Common myeloid progenitor, CD34-positive (primary cell): ENCODE measurements at regions of chr2 and their contacts with region 1.

Region 1: DNA sequence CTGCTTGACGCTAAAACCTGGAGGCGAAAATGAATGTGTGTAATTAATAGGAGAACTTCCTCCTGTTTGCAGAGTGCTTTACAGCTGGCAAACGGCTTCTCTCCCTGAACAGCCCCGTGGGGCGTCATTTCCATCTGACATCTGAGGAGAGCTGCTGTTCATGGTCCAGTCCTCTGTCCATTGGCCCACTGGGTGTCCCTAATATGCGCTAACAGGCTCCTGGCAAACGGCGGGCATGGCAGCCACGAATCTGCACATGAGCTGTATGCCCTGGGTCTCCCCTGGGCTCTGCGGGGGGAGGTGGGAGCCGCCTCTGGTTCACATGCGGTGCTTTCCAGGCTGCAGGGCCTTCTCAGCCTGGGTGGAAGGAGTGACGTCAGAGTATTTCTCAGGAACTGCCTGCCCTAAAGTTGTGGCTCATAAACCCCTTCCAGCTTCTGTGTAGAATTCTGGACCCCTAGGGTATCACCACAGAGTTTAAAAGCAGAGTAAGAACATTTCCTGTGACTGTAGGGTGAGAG is 73.2 kb downstream of the LRRFIP1 start:
- DNase-seq: peak in 2 of 3 donors; percentile 87 to 88
- H3K4me3 ChIP-seq: peak overlapping the region in 4 of 7 experiments; percentile 33 to 69 (median 46)
- H3K27ac ChIP-seq: peak overlapping the region; percentile 16 to 73
- H3K4me1 ChIP-seq: peaks cover 55 to 98% (median 97%) of the 10 kb centered on the region in 4 experiments
- H3K27me3 ChIP-seq: no peaks in the 10 kb centered on the region

Region 2: GRCh38 chr2:237744613-237745249 is 44.2 kb after region 1 on chr2:
- CTCF ChIA-PET with region 1: interaction called, 17 read pairs
- POLR2A ChIA-PET with region 1: no interaction called
- DNase-seq: peak; percentile 60 to 72 (median 68)
- H3K4me3 ChIP-seq: no peak overlapping the region
- H3K27ac ChIP-seq: no peak overlapping the region
- H3K4me1 ChIP-seq: peaks cover 0 to 28% (median 9%) of the 10 kb centered on the region in 4 experiments
- H3K27me3 ChIP-seq: no peaks in the 10 kb centered on the region

Region 3: GRCh38 chr2:237754626-237755248 is 54.2 kb after region 1 on chr2:
- CTCF ChIA-PET with region 1: no interaction called
- POLR2A ChIA-PET with region 1: no interaction called
- DNase-seq: no peak
- H3K4me3 ChIP-seq: no peak overlapping the region
- H3K27ac ChIP-seq: no peak overlapping the region
- H3K4me1 ChIP-seq: peaks cover 0 to 2% (median 0%) of the 10 kb centered on the region in 4 experiments
- H3K27me3 ChIP-seq: no peaks in the 10 kb centered on the region

Region 4: GRCh38 chr2:237888389-237888788 is 187.8 kb after region 1 on chr2:
- CTCF ChIA-PET with region 1: no interaction called
- POLR2A ChIA-PET with region 1: no interaction called
- DNase-seq: no peak
- H3K4me3 ChIP-seq: no peak overlapping the region
- H3K27ac ChIP-seq: no peak overlapping the region
- H3K4me1 ChIP-seq: peaks cover 5 to 21% (median 14%) of the 10 kb centered on the region in 4 experiments
- H3K27me3 ChIP-seq: no peaks in the 10 kb centered on the region

Region 5: GRCh38 chr2:239519089-239519920 is 1818.7 kb after region 1 on chr2:
- CTCF ChIA-PET with region 1: no interaction called
- POLR2A ChIA-PET with region 1: no interaction called
- DNase-seq: peak in 2 of 3 donors; percentile 26 to 35
- H3K4me3 ChIP-seq: no peak overlapping the region
- H3K27ac ChIP-seq: no peak overlapping the region
- H3K4me1 ChIP-seq: peaks cover 0 to 2% (median 0%) of the 10 kb centered on the region in 4 experiments
- H3K27me3 ChIP-seq: peaks cover 0 to 2% (median 0%) of the 10 kb centered on the region in 5 experiments